ENCODE measurements at regions of chr1 and their contacts with region 1.

Region 1: DNA sequence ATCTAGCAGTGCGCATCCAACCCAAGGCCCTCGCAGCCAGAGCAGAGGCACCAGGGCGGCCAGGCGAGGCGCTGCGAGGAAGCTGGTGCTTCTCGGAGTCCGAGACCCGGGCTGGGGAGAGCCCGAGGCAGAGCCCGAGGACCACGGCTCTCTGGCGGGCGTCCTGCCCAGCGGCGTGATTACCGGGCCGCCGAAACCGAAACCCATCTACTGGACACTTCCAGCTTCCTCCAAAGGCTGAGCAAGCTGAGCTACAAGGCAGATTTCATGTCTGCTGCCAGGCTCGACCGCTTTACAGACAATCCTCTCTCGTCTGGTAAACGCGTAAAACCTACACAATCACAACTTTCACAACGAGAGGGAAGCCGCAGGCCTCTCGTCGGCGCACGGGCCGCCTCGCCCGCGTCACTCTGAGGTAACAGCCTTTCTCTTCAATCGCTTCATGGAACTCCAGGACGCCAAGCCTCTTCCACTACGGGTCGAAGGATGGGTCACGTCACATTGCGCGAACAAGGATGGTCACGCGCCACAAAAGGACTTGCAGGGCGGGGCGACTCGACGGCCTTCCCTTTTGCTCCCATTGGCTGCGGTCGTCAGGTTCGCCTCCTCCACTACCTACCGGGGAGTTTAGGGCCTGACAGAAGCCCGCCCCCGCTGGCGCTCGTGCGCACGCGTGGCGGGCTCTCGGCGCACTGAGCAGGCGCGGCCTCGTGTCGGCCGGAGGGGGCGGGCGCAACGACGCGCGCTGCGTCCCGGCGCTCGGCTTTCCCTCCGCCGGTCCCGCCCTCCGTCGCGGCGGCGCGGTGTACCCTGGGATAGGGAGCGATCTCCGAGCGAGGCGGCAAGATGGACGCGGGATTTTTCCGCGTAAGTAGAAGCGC is at the start of gene SRRM1:
- DNase-seq: peak; percentile 96 to 100 (median 98)
- ATAC-seq: peak; percentile 87
- H3K4me3 ChIP-seq: peak within 1 kb of the TSS; percentile 89
- H3K4me3 Mint-ChIP-seq: peak within 1 kb of the TSS; percentile 90
- H3K27ac ChIP-seq: peak within 1 kb of the TSS; percentile 99
- H3K27ac Mint-ChIP-seq: peak within 1 kb of the TSS; percentile 96
- H3K4me1 ChIP-seq: peaks cover 26% of the 10 kb centered on the region
- H3K4me1 Mint-ChIP-seq: peaks cover 55% of the 10 kb centered on the region
- H3K27me3 ChIP-seq: no peaks in the 10 kb centered on the region
- H3K27me3 Mint-ChIP-seq: no peaks in the 10 kb centered on the region
- CTCF ChIP-seq: no peak
- total RNA-seq, gene SRRM1: 338 to 360 TPM

Region 2: GRCh38 chr1:24481101-24481500 is 161.6 kb before region 1 on chr1:
- CTCF ChIA-PET with region 1: no interaction called
- POLR2A ChIA-PET with region 1: interaction called, 8 read pairs
- intact Hi-C with region 1: loop called in 1 of 2 experiments (anchors 5 kb)
- DNase-seq: peak in 13 of 14 experiments; percentile 23 to 90 (median 53)
- ATAC-seq: peak; percentile 70
- H3K4me3 ChIP-seq: no peak overlapping the region
- H3K4me3 Mint-ChIP-seq: peak overlapping the region; percentile 90
- H3K27ac ChIP-seq: peak overlapping the region; percentile 25 to 81
- H3K27ac Mint-ChIP-seq: peak overlapping the region; percentile 98
- H3K4me1 ChIP-seq: peaks cover 63% of the 10 kb centered on the region
- H3K4me1 Mint-ChIP-seq: peaks cover 63% of the 10 kb centered on the region
- H3K27me3 ChIP-seq: no peaks in the 10 kb centered on the region
- H3K27me3 Mint-ChIP-seq: no peaks in the 10 kb centered on the region
- CTCF ChIP-seq: no peak

Region 3: DNA sequence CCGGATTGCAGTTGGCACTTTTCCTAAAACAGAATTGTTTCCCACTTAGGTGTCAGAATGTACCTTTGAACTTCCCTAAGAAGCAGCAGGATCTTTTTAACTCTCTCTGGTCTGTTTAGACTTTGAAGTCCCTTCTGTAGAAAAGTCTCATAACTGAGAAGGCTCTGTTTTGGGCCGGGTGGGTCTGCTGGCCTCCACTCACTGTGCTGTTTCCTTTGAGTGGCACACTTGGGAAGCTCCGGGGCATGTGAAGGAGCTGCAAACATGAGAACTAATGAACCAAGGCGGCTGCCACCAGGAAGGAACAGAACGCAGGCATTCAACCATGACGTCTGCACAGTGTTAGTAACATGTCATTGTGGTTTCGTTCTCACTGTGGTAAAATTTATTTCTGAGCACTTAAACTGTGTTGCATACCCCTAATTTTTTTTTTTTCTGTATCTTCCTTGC is 106.3 kb before region 1 on chr1:
- CTCF ChIA-PET with region 1: interaction called, 3 read pairs
- POLR2A ChIA-PET with region 1: no interaction called
- intact Hi-C with region 1: loop called in 1 of 2 experiments (anchors 2 kb)
- DNase-seq: peak; percentile 41 to 94 (median 64)
- ATAC-seq: peak; percentile 80
- H3K4me3 ChIP-seq: no peak overlapping the region
- H3K4me3 Mint-ChIP-seq: peak overlapping the region; percentile 86
- H3K27ac ChIP-seq: peak overlapping the region; percentile 86 to 95
- H3K27ac Mint-ChIP-seq: peak overlapping the region; percentile 96
- H3K4me1 ChIP-seq: peaks cover 43% of the 10 kb centered on the region
- H3K4me1 Mint-ChIP-seq: peaks cover 79% of the 10 kb centered on the region
- H3K27me3 ChIP-seq: no peaks in the 10 kb centered on the region
- H3K27me3 Mint-ChIP-seq: no peaks in the 10 kb centered on the region
- CTCF ChIP-seq: no peak

Region 4: DNA sequence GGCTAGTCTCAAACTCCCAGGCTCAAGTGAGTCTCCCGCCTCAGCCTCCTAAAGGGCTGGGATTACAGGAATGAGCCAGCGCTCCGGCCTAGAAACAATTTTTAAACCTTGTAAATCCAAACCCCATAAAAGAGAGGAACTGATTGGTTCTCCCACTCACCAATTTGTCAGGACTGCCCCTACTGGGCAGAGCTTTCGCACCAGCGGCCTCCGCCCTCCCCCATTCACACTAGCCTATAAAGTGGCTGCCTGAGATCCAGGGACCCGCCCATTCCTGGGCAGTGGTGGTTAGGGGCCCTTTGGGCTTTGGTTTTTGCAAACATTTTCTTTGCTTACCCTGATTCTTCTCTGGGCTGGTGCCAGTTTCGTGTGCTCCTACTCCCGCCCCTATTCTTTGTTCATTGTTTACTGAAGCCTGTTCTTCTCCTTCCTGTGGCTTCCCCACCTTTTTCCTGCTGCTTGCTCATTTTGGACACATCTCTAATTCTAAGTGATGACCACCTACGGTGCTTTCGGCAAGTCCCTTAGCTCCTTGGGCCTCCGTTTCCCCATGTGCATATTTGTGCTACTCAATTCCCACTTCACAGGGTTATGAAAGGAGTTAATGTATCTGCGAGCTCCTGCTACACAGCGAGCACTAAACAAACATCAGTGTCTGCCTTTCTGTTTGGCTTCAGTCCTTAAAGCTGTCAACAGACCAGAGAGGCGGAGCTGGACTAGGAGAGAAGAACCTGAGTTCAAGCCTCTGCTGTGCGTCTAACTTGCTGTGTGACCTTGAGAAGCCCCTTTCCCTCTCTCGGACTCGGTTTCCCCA is 62.7 kb after region 1 on chr1:
- CTCF ChIA-PET with region 1: no interaction called
- POLR2A ChIA-PET with region 1: no interaction called
- intact Hi-C with region 1: no loop called
- DNase-seq: peak in 6 of 14 experiments; percentile 14 to 66 (median 39)
- ATAC-seq: peak; percentile 81
- H3K4me3 ChIP-seq: no peak overlapping the region
- H3K4me3 Mint-ChIP-seq: no peak overlapping the region
- H3K27ac ChIP-seq: no peak overlapping the region
- H3K27ac Mint-ChIP-seq: peak overlapping the region; percentile 11
- H3K4me1 ChIP-seq: peaks cover 21% of the 10 kb centered on the region
- H3K4me1 Mint-ChIP-seq: peaks cover 7% of the 10 kb centered on the region
- H3K27me3 ChIP-seq: no peaks in the 10 kb centered on the region
- H3K27me3 Mint-ChIP-seq: no peaks in the 10 kb centered on the region
- CTCF ChIP-seq: no peak

Region 5: DNA sequence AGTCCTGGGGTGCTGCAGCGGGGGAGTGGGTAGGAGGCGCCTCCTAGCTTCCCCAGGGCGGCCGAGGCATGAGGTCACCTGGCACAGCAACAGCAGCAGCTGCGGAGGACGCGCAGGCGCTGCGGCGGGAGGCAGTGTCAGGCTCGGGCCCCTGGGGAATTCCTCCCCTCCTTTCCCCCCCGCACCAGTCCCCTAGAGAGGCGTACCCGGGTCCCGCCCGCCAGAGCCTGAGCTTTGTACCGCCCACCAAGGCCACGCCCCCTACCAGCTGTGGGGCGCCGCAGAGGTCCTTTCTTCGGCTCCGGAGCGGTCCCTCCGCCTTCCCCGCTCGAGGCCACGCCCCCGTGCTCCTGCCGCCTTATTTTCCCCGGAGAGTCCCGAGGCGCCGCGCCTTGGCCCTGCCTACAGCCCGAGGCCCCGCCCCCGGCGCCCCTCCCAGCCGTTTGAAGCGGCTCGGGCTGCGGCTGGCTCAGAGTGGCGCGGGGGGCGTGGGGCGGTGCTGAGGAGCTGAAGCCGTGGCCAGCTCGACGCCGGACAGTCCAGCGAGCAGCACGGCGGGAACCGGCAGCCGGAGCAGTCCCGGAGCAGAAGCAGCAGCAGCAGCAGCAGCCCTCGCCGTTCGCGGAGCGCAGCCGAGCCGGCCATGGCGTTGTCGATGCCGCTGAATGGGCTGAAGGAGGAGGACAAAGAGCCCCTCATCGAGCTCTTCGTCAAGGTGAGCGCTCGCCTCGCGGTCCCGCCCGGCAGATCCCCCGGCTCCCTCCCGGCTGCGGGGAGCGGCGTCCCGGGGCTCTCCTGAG is 102.4 kb after region 1 on chr1 and contains the start of gene CLIC4:
- CTCF ChIA-PET with region 1: no interaction called
- POLR2A ChIA-PET with region 1: interaction called, 6 read pairs
- intact Hi-C with region 1: loop called in 1 of 2 experiments (anchors 2 kb)
- DNase-seq: peak; percentile 98 to 100 (median 99)
- ATAC-seq: peak; percentile 87
- H3K4me3 ChIP-seq: peak within 1 kb of the TSS; percentile 58
- H3K4me3 Mint-ChIP-seq: peak within 1 kb of the TSS; percentile 93
- H3K27ac ChIP-seq: no peak within 1 kb of the TSS
- H3K27ac Mint-ChIP-seq: peak within 1 kb of the TSS; percentile 80
- H3K4me1 ChIP-seq: peaks cover 15% of the 10 kb centered on the region
- H3K4me1 Mint-ChIP-seq: peaks cover 18% of the 10 kb centered on the region
- H3K27me3 ChIP-seq: peaks cover 0 to 3% of the 10 kb centered on the region in 2 experiments
- H3K27me3 Mint-ChIP-seq: no peaks in the 10 kb centered on the region
- CTCF ChIP-seq: no peak
- total RNA-seq, gene CLIC4: 1.1 to 1.3 TPM

Region 6: GRCh38 chr1:25858906-25859789 is 1216.4 kb after region 1 on chr1 and contains the start of gene AUNIP:
- CTCF ChIA-PET with region 1: no interaction called
- POLR2A ChIA-PET with region 1: no interaction called
- intact Hi-C with region 1: loop called in 1 of 2 experiments (anchors 10 kb)
- DNase-seq: peak; percentile 78 to 97 (median 87)
- ATAC-seq: peak; percentile 99
- H3K4me3 ChIP-seq: peak within 1 kb of the TSS; percentile 72
- H3K4me3 Mint-ChIP-seq: peak within 1 kb of the TSS; percentile 86
- H3K27ac ChIP-seq: peak within 1 kb of the TSS; percentile 31 to 58
- H3K27ac Mint-ChIP-seq: peak within 1 kb of the TSS; percentile 87
- H3K4me1 ChIP-seq: peaks cover 22% of the 10 kb centered on the region
- H3K4me1 Mint-ChIP-seq: peaks cover 20% of the 10 kb centered on the region
- H3K27me3 ChIP-seq: no peaks in the 10 kb centered on the region
- H3K27me3 Mint-ChIP-seq: no peaks in the 10 kb centered on the region
- CTCF ChIP-seq: no peak
- total RNA-seq, gene AUNIP: not detected

Region 7: DNA sequence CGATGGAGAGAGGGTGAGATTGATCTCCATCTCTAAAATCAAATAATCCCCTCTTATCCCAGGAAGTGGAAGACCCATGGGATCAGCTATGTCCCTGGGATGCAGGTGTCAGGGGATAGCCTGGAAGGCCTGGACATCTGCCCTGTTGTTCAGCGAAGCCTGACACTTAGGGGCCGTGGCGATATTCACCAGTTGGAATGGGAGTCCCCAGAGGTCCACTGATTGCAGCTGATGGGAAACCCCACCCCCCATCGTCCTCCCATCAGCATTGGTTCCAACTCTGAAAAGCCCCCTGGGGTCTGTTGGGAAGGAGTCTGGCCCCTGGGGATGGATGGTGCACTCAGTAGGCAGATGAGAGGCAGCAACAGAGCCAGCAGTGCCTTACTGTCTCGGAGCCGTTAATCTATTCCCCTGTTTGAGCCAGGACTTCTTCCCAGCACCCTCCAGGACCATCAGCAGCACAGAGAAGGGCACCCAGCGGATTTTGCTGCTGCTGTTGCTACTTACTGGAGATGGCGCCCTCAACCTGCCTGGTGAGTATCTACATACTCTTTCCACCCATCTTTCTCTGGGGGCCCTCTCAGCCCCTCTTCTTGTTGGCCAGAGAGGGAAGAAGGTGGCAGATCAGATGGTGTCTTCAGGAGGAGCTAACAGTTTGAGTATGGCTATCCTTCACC is 1561.1 kb after region 1 on chr1:
- CTCF ChIA-PET with region 1: no interaction called
- POLR2A ChIA-PET with region 1: no interaction called
- intact Hi-C with region 1: no loop called
- DNase-seq: no peak
- ATAC-seq: no peak
- H3K4me3 ChIP-seq: no peak overlapping the region
- H3K4me3 Mint-ChIP-seq: no peak overlapping the region
- H3K27ac ChIP-seq: no peak overlapping the region
- H3K27ac Mint-ChIP-seq: no peak overlapping the region
- H3K4me1 ChIP-seq: peaks cover 34% of the 10 kb centered on the region
- H3K4me1 Mint-ChIP-seq: peaks cover 23% of the 10 kb centered on the region
- H3K27me3 ChIP-seq: no peaks in the 10 kb centered on the region
- H3K27me3 Mint-ChIP-seq: no peaks in the 10 kb centered on the region
- CTCF ChIP-seq: no peak